ENCODE measurements at regions of chr22 and their contacts with region 1.

Region 1: GRCh38 chr22:35627264-35628041 is 10.3 kb upstream of the MB start:
- DNase-seq: peak; percentile 22
- H3K4me3 Mint-ChIP-seq: peak overlapping the region; percentile 82
- H3K27ac Mint-ChIP-seq: peak overlapping the region; percentile 49
- H3K4me1 Mint-ChIP-seq: peaks cover 38% of the 10 kb centered on the region
- H3K27me3 Mint-ChIP-seq: peaks cover 1% of the 10 kb centered on the region

Region 2: GRCh38 chr22:35430897-35431322 is 196.5 kb before region 1 on chr22:
- intact Hi-C with region 1: loop called (anchors 1 kb)
- DNase-seq: peak; percentile 38
- H3K4me3 Mint-ChIP-seq: no peak overlapping the region
- H3K27ac Mint-ChIP-seq: no peak overlapping the region
- H3K4me1 Mint-ChIP-seq: no peaks in the 10 kb centered on the region
- H3K27me3 Mint-ChIP-seq: no peaks in the 10 kb centered on the region

Region 3: GRCh38 chr22:35648066-35649025 is 20.9 kb after region 1 on chr22 and contains the start of gene APOL6:
- intact Hi-C with region 1: loop called (anchors 1 kb)
- DNase-seq: peak; percentile 71
- H3K4me3 Mint-ChIP-seq: peak within 1 kb of the TSS; percentile 100
- H3K27ac Mint-ChIP-seq: peak within 1 kb of the TSS; percentile 100
- H3K4me1 Mint-ChIP-seq: peaks cover 45% of the 10 kb centered on the region
- H3K27me3 Mint-ChIP-seq: no peaks in the 10 kb centered on the region
- total RNA-seq, gene APOL6: 27.3 and 27.7 TPM in 2 replicates

Region 4: GRCh38 chr22:35697142-35697541 is 69.7 kb after region 1 on chr22:
- intact Hi-C with region 1: loop called (anchors 5 kb)
- DNase-seq: peak; percentile 40
- H3K4me3 Mint-ChIP-seq: no peak overlapping the region
- H3K27ac Mint-ChIP-seq: no peak overlapping the region
- H3K4me1 Mint-ChIP-seq: no peaks in the 10 kb centered on the region
- H3K27me3 Mint-ChIP-seq: no peaks in the 10 kb centered on the region

Region 5: GRCh38 chr22:35712672-35713071 is 85.2 kb after region 1 on chr22:
- intact Hi-C with region 1: no loop called
- DNase-seq: no peak
- H3K4me3 Mint-ChIP-seq: no peak overlapping the region
- H3K27ac Mint-ChIP-seq: no peak overlapping the region
- H3K4me1 Mint-ChIP-seq: no peaks in the 10 kb centered on the region
- H3K27me3 Mint-ChIP-seq: peaks cover 6% of the 10 kb centered on the region

Region 6: GRCh38 chr22:35921777-35922176 is 294.3 kb after region 1 on chr22:
- intact Hi-C with region 1: loop called (anchors 1 kb)
- DNase-seq: peak; percentile 14
- H3K4me3 Mint-ChIP-seq: no peak overlapping the region
- H3K27ac Mint-ChIP-seq: no peak overlapping the region
- H3K4me1 Mint-ChIP-seq: peaks cover 9% of the 10 kb centered on the region
- H3K27me3 Mint-ChIP-seq: no peaks in the 10 kb centered on the region

Region 7: DNA sequence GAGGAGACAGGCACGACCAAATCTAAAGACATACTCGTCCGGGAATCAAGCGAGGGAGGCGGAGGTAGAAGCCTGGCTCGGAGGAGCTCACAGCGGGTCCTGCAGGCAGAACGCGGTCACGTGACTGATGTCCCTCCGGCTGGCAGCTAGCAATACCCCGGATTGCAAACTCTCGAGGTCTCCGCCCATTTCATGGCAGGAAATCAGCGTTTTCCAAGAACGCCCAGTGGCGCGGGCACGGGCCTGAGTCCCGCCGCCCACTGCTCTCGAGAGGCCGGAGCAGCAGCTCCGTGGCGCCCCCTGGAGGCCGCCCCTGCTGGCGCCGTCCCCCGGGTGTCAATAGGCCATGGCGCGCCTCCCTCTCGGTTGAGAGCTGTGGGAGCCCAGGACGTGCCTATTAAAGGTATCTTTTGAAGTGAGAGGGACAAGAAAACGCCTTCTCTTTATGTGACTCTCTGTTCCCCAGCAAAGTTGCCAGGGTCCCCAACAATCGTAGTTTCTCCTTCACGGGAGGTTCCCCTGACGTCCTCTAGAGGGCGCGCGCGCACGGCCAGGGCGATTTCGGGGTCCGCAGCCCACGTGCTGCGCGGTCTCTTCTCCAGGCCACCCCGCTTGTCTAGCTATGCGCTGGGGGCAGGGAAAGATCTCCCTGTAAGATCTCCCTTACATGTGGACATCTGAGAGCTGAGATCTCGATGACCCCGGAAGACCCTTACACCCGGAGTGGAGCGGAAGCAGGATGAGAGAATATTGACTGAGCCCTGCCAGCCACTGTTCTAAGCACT is 438.5 kb after region 1 on chr22:
- intact Hi-C with region 1: loop called (anchors 1 kb)
- DNase-seq: peak; percentile 49
- H3K4me3 Mint-ChIP-seq: peak overlapping the region; percentile 84
- H3K27ac Mint-ChIP-seq: peak overlapping the region; percentile 83
- H3K4me1 Mint-ChIP-seq: peaks cover 11% of the 10 kb centered on the region
- H3K27me3 Mint-ChIP-seq: peaks cover 21% of the 10 kb centered on the region

Region 8: GRCh38 chr22:36104988-36105387 is 477.5 kb after region 1 on chr22:
- intact Hi-C with region 1: no loop called
- DNase-seq: no peak
- H3K4me3 Mint-ChIP-seq: no peak overlapping the region
- H3K27ac Mint-ChIP-seq: no peak overlapping the region
- H3K4me1 Mint-ChIP-seq: peaks cover 6% of the 10 kb centered on the region
- H3K27me3 Mint-ChIP-seq: peaks cover 9% of the 10 kb centered on the region